Breast epithelium (tissue), 4 donors: ENCODE measurements at regions of chr4 and their contacts with region 1.

Region 1: GRCh38 chr4:41155194-41155830 is 59.0 kb downstream of the APBB2 start:
- DNase-seq: no peak
- H3K4me3 ChIP-seq: no peak overlapping the region
- H3K27ac ChIP-seq: peak overlapping the region in 1 of 2 donors; percentile 0
- H3K4me1 ChIP-seq: no peaks in the 10 kb centered on the region
- H3K27me3 ChIP-seq: no peaks in the 10 kb centered on the region
- CTCF ChIP-seq: no peak
- POLR2A ChIP-seq: no peak

Region 2: GRCh38 chr4:41204400-41204978 is 49.2 kb after region 1 on chr4:
- intact Hi-C with region 1: loop called (anchors 10 kb)
- DNase-seq: no peak
- H3K4me3 ChIP-seq: no peak overlapping the region
- H3K27ac ChIP-seq: peak overlapping the region; percentile 48 to 57
- H3K4me1 ChIP-seq: peaks cover 0 to 8% of the 10 kb centered on the region in 2 donors
- H3K27me3 ChIP-seq: no peaks in the 10 kb centered on the region
- CTCF ChIP-seq: no peak
- POLR2A ChIP-seq: no peak

Region 3: DNA sequence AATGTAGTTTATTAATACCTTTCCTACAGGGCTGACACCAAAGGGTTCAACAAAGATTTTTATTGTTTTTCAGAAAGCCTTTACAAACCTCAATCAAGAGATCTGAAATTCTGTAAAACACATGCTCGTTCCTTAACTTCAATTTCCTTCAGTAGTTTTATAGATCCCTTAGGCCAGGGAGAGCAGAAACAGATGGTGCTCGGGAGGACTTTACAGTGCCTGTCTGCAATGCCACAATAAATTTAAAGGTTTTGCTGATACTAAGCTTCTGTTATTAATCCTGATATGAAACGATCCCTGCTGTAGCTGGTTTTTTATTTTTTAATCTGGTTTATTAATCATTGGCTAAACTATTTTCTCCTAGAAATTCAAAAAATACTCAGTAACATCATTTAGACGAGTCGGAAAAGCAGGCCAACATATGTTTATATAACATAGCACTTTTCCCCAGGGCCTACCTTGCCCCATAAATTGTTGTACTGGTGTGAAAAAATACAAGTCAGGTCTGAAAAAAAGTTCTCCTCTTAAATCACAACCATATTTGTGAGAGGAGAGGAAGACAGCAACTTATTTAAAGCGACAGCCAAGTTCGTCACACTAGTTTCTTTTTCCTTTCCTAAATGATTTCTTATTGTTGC is 1281.7 kb after region 1 on chr4:
- intact Hi-C with region 1: loop called (anchors 10 kb)
- DNase-seq: no peak
- H3K4me3 ChIP-seq: no peak overlapping the region
- H3K27ac ChIP-seq: no peak overlapping the region
- H3K4me1 ChIP-seq: no peaks in the 10 kb centered on the region
- H3K27me3 ChIP-seq: no peaks in the 10 kb centered on the region
- CTCF ChIP-seq: no peak
- POLR2A ChIP-seq: no peak